ENCODE measurements at regions of chr16 and their contacts with region 1.

Region 1: GRCh38 chr16:67183627-67184328 is at the start of gene MATCAP1:
- DNase-seq: peak; percentile 95 to 98 (median 97)
- H3K4me3 ChIP-seq: peak within 1 kb of the TSS; percentile 65 to 85
- H3K4me3 Mint-ChIP-seq: peak within 1 kb of the TSS; percentile 54 to 96 (median 68)
- H3K27ac ChIP-seq: peak within 1 kb of the TSS; percentile 91
- H3K27ac Mint-ChIP-seq: peak within 1 kb of the TSS in 6 of 7 donors; percentile 15 to 98 (median 66)
- H3K4me1 ChIP-seq: peaks cover 25% of the 10 kb centered on the region
- H3K4me1 Mint-ChIP-seq: peaks cover 8 to 17% (median 11%) of the 10 kb centered on the region in 4 donors
- H3K27me3 ChIP-seq: no peaks in the 10 kb centered on the region
- H3K27me3 Mint-ChIP-seq: peaks cover 0 to 2% of the 10 kb centered on the region in 2 donors
- total RNA-seq, gene MATCAP1: 8.6 to 9.0 TPM

Region 2: GRCh38 chr16:66954097-66954659 is 229.6 kb before region 1 on chr16:
- CTCF ChIA-PET with region 1: interaction called, 5 read pairs
- POLR2A ChIA-PET with region 1: interaction called, 4 read pairs
- intact Hi-C with region 1: loop called (anchors 1 kb)
- DNase-seq: peak; percentile 63 to 73 (median 69)
- H3K4me3 ChIP-seq: no peak overlapping the region
- H3K4me3 Mint-ChIP-seq: no peak overlapping the region
- H3K27ac ChIP-seq: no peak overlapping the region
- H3K27ac Mint-ChIP-seq: peak overlapping the region in 1 of 7 donors; percentile 12
- H3K4me1 ChIP-seq: no peaks in the 10 kb centered on the region
- H3K4me1 Mint-ChIP-seq: peaks cover 2 to 7% (median 3%) of the 10 kb centered on the region in 4 donors
- H3K27me3 ChIP-seq: peaks cover 8% of the 10 kb centered on the region
- H3K27me3 Mint-ChIP-seq: peaks cover 25 to 33% of the 10 kb centered on the region in 2 donors

Region 3: GRCh38 chr16:67017810-67018488 is 165.8 kb before region 1 on chr16:
- CTCF ChIA-PET with region 1: interaction called, 25 read pairs
- POLR2A ChIA-PET with region 1: interaction called, 5 read pairs
- intact Hi-C with region 1: loop called (anchors 1 kb)
- DNase-seq: peak; percentile 82 to 88 (median 86)
- H3K4me3 ChIP-seq: no peak overlapping the region
- H3K4me3 Mint-ChIP-seq: peak overlapping the region in 2 of 8 donors; percentile 3 to 21
- H3K27ac ChIP-seq: no peak overlapping the region
- H3K27ac Mint-ChIP-seq: peak overlapping the region in 4 of 7 donors; percentile 24 to 77 (median 56)
- H3K4me1 ChIP-seq: peaks cover 13% of the 10 kb centered on the region
- H3K4me1 Mint-ChIP-seq: peaks cover 2 to 19% (median 8%) of the 10 kb centered on the region in 4 donors
- H3K27me3 ChIP-seq: no peaks in the 10 kb centered on the region
- H3K27me3 Mint-ChIP-seq: no peaks in the 10 kb centered on the region

Region 4: GRCh38 chr16:67109407-67110135 is 74.2 kb before region 1 on chr16 and contains the start of gene PHAF1:
- CTCF ChIA-PET with region 1: interaction called, 6 read pairs
- POLR2A ChIA-PET with region 1: interaction called, 3 read pairs
- intact Hi-C with region 1: loop called (anchors 2 kb)
- DNase-seq: peak; percentile 93 to 98 (median 96)
- H3K4me3 ChIP-seq: peak within 1 kb of the TSS; percentile 85 to 96
- H3K4me3 Mint-ChIP-seq: peak within 1 kb of the TSS; percentile 92 to 97 (median 94)
- H3K27ac ChIP-seq: peak within 1 kb of the TSS; percentile 66
- H3K27ac Mint-ChIP-seq: peak within 1 kb of the TSS; percentile 84 to 95 (median 91)
- H3K4me1 ChIP-seq: peaks cover 30% of the 10 kb centered on the region
- H3K4me1 Mint-ChIP-seq: peaks cover 21 to 41% (median 30%) of the 10 kb centered on the region in 4 donors
- H3K27me3 ChIP-seq: no peaks in the 10 kb centered on the region
- H3K27me3 Mint-ChIP-seq: no peaks in the 10 kb centered on the region
- total RNA-seq, gene PHAF1: 22.2 to 22.7 TPM

Region 5: DNA sequence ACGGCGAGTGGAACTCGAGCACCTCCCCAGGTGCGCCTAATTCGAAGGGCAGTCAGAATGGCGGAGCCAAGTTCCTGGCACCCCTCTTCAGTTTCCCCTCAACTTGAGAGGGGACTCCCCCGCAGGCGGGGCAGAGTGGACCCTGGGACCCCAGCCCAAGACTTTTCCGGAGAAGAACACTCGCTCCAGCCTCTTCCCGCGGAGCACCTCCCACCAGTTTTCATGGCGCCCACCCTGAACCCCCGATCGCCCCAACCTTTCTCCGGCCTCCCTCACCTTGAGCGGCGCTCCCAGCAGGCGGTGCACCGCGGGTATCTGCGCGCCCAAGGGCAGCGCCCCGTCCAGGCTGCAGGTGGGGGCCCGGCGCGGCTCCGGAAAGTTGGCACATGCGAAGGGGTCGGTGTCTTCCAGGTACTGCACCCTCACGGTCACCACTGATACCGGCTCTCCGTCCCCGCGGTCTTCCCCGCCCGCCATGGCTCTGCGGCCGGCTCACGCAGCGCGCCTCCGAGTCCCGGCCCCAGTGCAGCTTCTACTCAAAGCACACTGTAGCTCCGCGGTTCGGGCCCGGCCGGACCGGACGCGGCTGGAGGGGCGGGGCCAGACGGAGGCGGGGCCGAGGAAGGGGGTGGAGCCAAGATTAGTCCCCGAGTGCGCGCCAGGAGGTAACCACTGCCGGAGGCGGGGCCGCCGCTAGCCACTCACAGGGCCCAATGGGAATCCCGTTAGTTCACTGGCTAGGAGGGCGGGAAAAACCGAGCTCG is 63.3 kb after region 1 on chr16 and contains the start of gene FHOD1:
- CTCF ChIA-PET with region 1: interaction called, 3 read pairs
- POLR2A ChIA-PET with region 1: interaction called, 6 read pairs
- intact Hi-C with region 1: loop called (anchors 1 kb)
- DNase-seq: peak; percentile 92 to 96 (median 93)
- H3K4me3 ChIP-seq: peak within 1 kb of the TSS; percentile 73 to 85
- H3K4me3 Mint-ChIP-seq: peak within 1 kb of the TSS; percentile 84 to 95 (median 91)
- H3K27ac ChIP-seq: peak within 1 kb of the TSS; percentile 82
- H3K27ac Mint-ChIP-seq: peak within 1 kb of the TSS; percentile 84 to 100 (median 95)
- H3K4me1 ChIP-seq: peaks cover 57% of the 10 kb centered on the region
- H3K4me1 Mint-ChIP-seq: peaks cover 26 to 61% (median 44%) of the 10 kb centered on the region in 4 donors
- H3K27me3 ChIP-seq: no peaks in the 10 kb centered on the region
- H3K27me3 Mint-ChIP-seq: peaks cover 1 to 3% of the 10 kb centered on the region in 2 donors
- total RNA-seq, gene FHOD1: 56.0 to 63.3 TPM

Region 6: DNA sequence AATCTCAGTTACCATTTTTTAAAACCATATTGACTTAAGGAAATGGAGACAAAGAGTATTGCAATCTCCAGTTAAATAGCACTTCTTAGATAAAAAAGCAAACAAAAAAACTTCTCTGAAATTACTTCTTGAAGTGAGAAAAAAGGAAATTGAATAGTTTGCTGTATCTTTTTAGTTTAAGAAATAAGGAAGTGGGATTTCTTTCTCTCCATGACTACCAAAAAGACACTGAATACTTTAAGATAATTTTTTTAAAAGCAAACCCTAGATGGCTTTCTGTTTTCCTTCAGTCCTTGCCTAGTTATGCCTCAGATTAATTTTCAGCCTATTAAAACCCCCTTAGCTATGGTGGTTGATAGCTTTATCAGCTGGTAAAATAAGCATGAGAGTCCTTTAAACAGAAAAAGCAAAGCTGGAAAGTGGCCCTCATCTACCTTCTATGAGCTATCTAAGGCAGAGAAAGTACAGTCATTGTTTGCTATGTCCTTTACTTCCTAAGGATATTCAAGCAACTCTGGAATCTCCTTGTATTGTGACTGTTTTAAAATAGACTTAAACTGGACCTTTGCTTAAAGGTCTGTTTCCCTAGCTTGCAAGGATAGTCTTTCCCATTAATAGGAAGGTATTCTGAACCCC is 180.9 kb after region 1 on chr16:
- CTCF ChIA-PET with region 1: no interaction called
- POLR2A ChIA-PET with region 1: no interaction called
- intact Hi-C with region 1: no loop called
- DNase-seq: no peak
- H3K4me3 ChIP-seq: no peak overlapping the region
- H3K4me3 Mint-ChIP-seq: no peak overlapping the region
- H3K27ac ChIP-seq: no peak overlapping the region
- H3K27ac Mint-ChIP-seq: peak overlapping the region in 1 of 7 donors; percentile 39
- H3K4me1 ChIP-seq: peaks cover 8% of the 10 kb centered on the region
- H3K4me1 Mint-ChIP-seq: peaks cover 5 to 8% (median 6%) of the 10 kb centered on the region in 4 donors
- H3K27me3 ChIP-seq: peaks cover 6% of the 10 kb centered on the region
- H3K27me3 Mint-ChIP-seq: peaks cover 4% of the 10 kb centered on the region in 2 donors